CD4-positive, alpha-beta T cell (primary cell): ENCODE measurements at regions of chr18 and their contacts with region 1.

Region 1: DNA sequence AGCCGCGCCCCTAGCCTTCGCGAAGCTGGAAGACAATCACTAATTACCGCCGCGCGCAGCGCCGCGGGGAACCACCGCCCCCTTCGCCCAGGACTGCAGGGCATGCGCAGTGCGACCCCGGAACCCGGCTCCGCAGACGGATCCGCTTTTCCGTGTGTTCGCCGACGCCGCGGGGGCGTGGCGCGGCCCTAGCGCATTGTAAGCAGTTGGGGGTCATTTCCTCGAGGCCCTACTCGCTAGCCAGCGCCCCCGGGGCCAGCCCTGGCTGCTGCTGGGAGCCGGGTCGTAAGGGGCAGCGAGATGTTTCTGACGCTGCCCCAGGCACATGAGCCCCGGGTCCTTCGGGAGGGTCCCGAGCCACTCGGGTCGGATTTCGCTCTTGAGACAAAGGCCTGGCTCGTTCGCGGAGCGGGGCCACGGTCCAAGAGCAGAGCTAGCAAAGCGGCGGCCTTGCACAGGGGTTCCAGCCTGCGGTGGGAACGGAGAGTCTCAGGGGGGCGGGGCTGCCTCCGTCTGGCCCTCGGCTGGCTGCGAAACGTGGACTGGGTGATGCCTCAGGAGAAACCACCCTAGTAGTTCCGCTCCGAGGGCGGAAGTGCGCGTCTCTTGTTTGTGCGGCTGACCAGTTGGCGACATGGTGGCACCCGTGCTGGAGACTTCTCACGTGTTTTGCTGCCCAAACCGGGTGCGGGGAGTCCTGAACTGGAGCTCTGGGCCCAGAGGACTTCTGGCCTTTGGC is at the starts of genes ELP2 and SLC39A6:
- DNase-seq: peak; percentile 91 to 98 (median 94)
- ATAC-seq: peak; percentile 87
- H3K4me3 ChIP-seq: peak within 1 kb of the TSS; percentile 77
- H3K4me3 Mint-ChIP-seq: peak within 1 kb of the TSS; percentile 95
- H3K27ac ChIP-seq: peak within 1 kb of the TSS; percentile 99
- H3K27ac Mint-ChIP-seq: peak within 1 kb of the TSS; percentile 98
- H3K4me1 ChIP-seq: peaks cover 48% of the 10 kb centered on the region
- H3K4me1 Mint-ChIP-seq: peaks cover 75% of the 10 kb centered on the region
- H3K27me3 ChIP-seq: no peaks in the 10 kb centered on the region
- H3K27me3 Mint-ChIP-seq: no peaks in the 10 kb centered on the region
- CTCF ChIP-seq: peak; percentile 0
- total RNA-seq, gene ELP2: 200 to 206 TPM
- total RNA-seq, gene SLC39A6: 10.6 to 11.0 TPM

Region 2: DNA sequence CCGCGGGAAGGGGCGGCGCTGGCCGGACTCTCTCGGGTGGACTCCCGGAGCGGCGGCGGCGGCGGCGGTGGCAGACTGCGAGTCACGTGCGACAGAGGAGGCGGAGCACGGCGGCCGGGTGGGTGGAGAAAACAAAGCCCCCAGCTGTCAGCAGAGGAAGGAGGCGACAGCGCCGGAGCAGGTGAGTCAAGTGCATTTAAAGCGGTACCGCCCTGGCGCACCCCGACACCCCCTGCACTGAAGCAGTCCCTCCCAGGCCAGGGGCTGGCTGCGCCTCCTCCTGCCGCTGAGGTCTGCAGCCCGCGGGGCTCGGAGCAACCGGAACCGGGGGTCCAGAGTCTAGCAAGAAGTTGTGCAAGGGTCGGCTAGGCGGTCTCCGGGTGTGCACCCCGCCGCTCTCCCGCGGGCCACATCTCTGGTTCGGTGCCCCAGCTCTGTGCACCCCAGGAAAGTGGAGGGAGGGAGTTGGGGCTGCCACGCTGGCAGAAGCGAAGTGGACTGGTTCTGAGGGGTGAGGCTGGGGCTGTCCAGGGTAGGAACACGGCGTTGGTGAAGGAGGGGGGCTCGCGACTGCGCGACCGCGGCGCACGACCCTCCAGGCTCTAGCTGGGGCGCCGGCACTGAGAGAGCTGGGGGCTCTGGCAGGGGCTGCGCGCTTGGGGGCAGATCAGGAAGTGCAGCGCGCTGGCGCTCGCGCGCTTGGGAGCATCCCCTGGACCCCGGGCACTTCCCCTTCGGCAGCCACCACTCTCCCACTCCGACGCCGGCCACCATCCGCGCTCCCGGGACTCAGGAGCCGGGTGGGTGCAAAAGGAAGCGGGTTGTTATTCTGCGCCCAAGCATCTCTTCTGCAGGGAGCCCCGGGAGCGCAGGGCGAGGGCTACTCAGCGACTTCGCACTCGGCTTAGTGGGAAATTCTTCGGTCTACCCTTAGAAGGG is 1152.3 kb before region 1 on chr18:
- CTCF ChIA-PET with region 1: no interaction called
- POLR2A ChIA-PET with region 1: no interaction called
- intact Hi-C with region 1: loop called in 1 of 2 experiments (anchors 10 kb)
- DNase-seq: peak; percentile 49 to 87 (median 75)
- ATAC-seq: peak; percentile 74
- H3K4me3 ChIP-seq: peak overlapping the region; percentile 97
- H3K4me3 Mint-ChIP-seq: peak overlapping the region; percentile 95
- H3K27ac ChIP-seq: no peak overlapping the region
- H3K27ac Mint-ChIP-seq: peak overlapping the region; percentile 39
- H3K4me1 ChIP-seq: peaks cover 35% of the 10 kb centered on the region
- H3K4me1 Mint-ChIP-seq: peaks cover 18% of the 10 kb centered on the region
- H3K27me3 ChIP-seq: peaks cover 0 to 5% of the 10 kb centered on the region in 2 experiments
- H3K27me3 Mint-ChIP-seq: peaks cover 9% of the 10 kb centered on the region
- CTCF ChIP-seq: no peak

Region 3: GRCh38 chr18:35110554-35111485 is 1018.6 kb before region 1 on chr18:
- CTCF ChIA-PET with region 1: no interaction called
- POLR2A ChIA-PET with region 1: no interaction called
- intact Hi-C with region 1: no loop called
- DNase-seq: no peak
- ATAC-seq: no peak
- H3K4me3 ChIP-seq: no peak overlapping the region
- H3K4me3 Mint-ChIP-seq: no peak overlapping the region
- H3K27ac ChIP-seq: no peak overlapping the region
- H3K27ac Mint-ChIP-seq: no peak overlapping the region
- H3K4me1 ChIP-seq: no peaks in the 10 kb centered on the region
- H3K4me1 Mint-ChIP-seq: peaks cover 42% of the 10 kb centered on the region
- H3K27me3 ChIP-seq: no peaks in the 10 kb centered on the region
- H3K27me3 Mint-ChIP-seq: no peaks in the 10 kb centered on the region
- CTCF ChIP-seq: no peak

Region 4: GRCh38 chr18:35290073-35290735 is 839.3 kb before region 1 on chr18 and contains the start of gene ZSCAN30:
- CTCF ChIA-PET with region 1: no interaction called
- POLR2A ChIA-PET with region 1: interaction called, 4 read pairs
- intact Hi-C with region 1: loop called in 1 of 2 experiments (anchors 5 kb)
- DNase-seq: peak; percentile 93 to 98 (median 96)
- ATAC-seq: peak; percentile 90
- H3K4me3 ChIP-seq: peak within 1 kb of the TSS; percentile 92
- H3K4me3 Mint-ChIP-seq: peak within 1 kb of the TSS; percentile 99
- H3K27ac ChIP-seq: peak within 1 kb of the TSS; percentile 55 to 87
- H3K27ac Mint-ChIP-seq: peak within 1 kb of the TSS; percentile 96
- H3K4me1 ChIP-seq: peaks cover 31% of the 10 kb centered on the region
- H3K4me1 Mint-ChIP-seq: peaks cover 78% of the 10 kb centered on the region
- H3K27me3 ChIP-seq: no peaks in the 10 kb centered on the region
- H3K27me3 Mint-ChIP-seq: no peaks in the 10 kb centered on the region
- CTCF ChIP-seq: no peak
- total RNA-seq, gene ZSCAN30: 9.6 to 11.6 TPM

Region 5: DNA sequence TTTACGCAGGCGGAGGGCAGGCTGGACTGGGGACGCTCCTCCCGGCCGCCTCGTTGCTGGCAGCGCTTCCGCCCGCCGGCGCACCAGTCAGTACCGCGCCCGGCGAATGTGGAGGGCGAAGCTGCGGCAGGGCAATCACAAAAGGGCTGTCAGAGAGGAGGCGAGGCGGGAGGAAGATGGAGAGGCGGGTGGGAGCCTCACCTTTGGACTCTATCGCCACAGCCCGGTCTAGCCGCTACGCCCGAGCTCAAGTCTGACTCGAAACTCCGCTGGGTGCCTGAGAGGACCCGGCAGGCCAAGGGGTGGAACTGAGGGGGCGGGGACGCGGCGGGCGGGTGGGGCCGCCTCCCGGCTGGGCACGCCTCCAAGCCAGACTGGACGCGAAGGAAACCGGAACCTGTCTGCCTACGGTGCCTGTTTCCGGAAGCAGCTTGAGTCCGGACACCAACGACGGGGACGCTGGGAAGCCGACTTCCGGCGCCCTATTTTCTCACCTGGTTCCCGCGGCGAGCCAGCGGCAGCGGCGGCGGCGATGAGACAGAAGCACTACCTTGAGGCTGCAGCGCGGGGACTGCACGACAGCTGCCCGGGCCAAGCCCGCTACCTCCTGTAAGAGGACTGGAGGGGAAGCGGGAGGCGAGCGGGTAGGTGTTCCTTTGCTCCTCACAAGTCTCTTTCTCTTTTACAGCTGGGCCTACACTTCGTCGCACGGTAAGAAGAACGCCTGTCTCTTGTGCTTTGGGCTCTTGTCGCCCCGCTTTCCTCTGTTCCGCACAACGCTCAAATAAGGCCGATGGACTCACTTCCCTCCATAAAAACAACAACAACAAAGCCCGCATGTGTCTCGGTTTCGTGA is 157.0 kb before region 1 on chr18 and contains the start of gene RMP24:
- CTCF ChIA-PET with region 1: interaction called, 3 read pairs
- POLR2A ChIA-PET with region 1: interaction called, 29 read pairs
- intact Hi-C with region 1: loop called in 1 of 2 experiments (anchors 2 kb)
- DNase-seq: peak; percentile 86 to 97 (median 92)
- ATAC-seq: peak; percentile 82
- H3K4me3 ChIP-seq: peak within 1 kb of the TSS; percentile 73
- H3K4me3 Mint-ChIP-seq: peak within 1 kb of the TSS; percentile 97
- H3K27ac ChIP-seq: peak within 1 kb of the TSS; percentile 84 to 88
- H3K27ac Mint-ChIP-seq: peak within 1 kb of the TSS; percentile 96
- H3K4me1 ChIP-seq: peaks cover 34% of the 10 kb centered on the region
- H3K4me1 Mint-ChIP-seq: peaks cover 72% of the 10 kb centered on the region
- H3K27me3 ChIP-seq: no peaks in the 10 kb centered on the region
- H3K27me3 Mint-ChIP-seq: no peaks in the 10 kb centered on the region
- CTCF ChIP-seq: no peak

Region 6: DNA sequence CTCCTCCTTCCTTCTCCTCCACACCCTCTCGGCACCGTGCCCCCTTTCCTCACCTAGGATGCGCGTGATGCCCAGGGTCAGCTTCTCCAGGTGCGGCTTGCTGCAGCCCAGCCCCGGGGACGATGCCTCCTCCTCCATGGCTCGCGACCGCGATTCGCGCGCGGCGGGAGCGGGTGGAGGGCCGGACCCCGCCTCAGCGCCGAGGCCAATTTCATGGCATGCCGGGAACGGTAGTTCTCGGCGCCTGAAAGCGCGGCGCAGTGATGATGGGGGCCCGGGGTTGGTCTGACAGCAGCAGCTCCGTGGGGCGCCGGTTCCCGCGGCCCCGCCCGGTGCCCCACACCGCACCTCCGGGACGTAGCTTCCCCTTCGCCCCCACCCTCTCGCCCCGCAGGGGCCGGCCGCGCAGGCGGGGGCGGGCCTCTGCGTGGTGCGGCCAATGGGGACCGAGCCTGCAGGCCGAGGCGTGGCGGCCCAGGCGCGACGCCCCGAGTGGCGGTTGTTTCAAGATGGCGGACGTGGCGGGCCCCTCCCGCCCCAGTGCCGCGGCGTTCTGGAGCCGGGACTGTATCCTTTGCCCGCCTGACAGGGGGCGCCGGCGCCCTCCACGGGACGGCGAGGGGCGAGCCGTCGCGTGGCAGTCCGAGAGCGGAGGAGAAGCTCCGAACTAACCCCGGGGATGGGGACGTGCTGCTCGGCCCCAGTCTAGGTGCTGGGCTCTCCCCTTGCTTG is 699.3 kb after region 1 on chr18 and contains the starts of genes KIAA1328 and TPGS2:
- CTCF ChIA-PET with region 1: no interaction called
- POLR2A ChIA-PET with region 1: interaction called, 12 read pairs
- intact Hi-C with region 1: loop called in 1 of 2 experiments (anchors 5 kb)
- DNase-seq: peak; percentile 68 to 96 (median 83)
- ATAC-seq: peak; percentile 90
- H3K4me3 ChIP-seq: peak within 1 kb of the TSS; percentile 86
- H3K4me3 Mint-ChIP-seq: peak within 1 kb of the TSS; percentile 87
- H3K27ac ChIP-seq: peak within 1 kb of the TSS; percentile 58 to 78
- H3K27ac Mint-ChIP-seq: peak within 1 kb of the TSS; percentile 73
- H3K4me1 ChIP-seq: peaks cover 24% of the 10 kb centered on the region
- H3K4me1 Mint-ChIP-seq: peaks cover 60% of the 10 kb centered on the region
- H3K27me3 ChIP-seq: no peaks in the 10 kb centered on the region
- H3K27me3 Mint-ChIP-seq: no peaks in the 10 kb centered on the region
- CTCF ChIP-seq: peak; percentile 63
- total RNA-seq, gene KIAA1328: 8.7 to 9.4 TPM
- total RNA-seq, gene TPGS2: 16.4 to 19.0 TPM

Region 7: DNA sequence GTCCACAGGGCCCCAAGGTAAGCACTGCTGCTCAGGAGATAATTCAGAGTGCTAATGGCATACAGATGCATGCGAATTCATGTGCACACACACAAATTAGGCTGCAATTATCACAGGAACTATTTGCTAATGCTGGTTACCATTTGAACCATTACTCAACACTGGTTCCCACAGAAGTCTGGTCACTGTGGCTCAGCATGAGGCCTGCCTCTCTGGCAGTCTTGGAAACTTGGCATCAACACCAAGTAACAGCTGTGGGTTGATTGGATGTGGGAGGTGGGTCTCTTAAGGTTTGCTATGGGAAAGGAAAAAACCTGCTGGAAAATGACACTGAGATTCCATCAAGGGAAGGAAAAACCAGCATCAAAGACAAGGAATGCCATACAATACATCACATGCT is 1331.1 kb after region 1 on chr18:
- CTCF ChIA-PET with region 1: no interaction called
- POLR2A ChIA-PET with region 1: no interaction called
- intact Hi-C with region 1: no loop called
- DNase-seq: no peak
- ATAC-seq: no peak
- H3K4me3 ChIP-seq: no peak overlapping the region
- H3K4me3 Mint-ChIP-seq: no peak overlapping the region
- H3K27ac ChIP-seq: no peak overlapping the region
- H3K27ac Mint-ChIP-seq: no peak overlapping the region
- H3K4me1 ChIP-seq: no peaks in the 10 kb centered on the region
- H3K4me1 Mint-ChIP-seq: no peaks in the 10 kb centered on the region
- H3K27me3 ChIP-seq: no peaks in the 10 kb centered on the region
- H3K27me3 Mint-ChIP-seq: peaks cover 8% of the 10 kb centered on the region
- CTCF ChIP-seq: no peak